ENCODE measurements at regions of chr10 and their contacts with region 1.

Region 1: DNA sequence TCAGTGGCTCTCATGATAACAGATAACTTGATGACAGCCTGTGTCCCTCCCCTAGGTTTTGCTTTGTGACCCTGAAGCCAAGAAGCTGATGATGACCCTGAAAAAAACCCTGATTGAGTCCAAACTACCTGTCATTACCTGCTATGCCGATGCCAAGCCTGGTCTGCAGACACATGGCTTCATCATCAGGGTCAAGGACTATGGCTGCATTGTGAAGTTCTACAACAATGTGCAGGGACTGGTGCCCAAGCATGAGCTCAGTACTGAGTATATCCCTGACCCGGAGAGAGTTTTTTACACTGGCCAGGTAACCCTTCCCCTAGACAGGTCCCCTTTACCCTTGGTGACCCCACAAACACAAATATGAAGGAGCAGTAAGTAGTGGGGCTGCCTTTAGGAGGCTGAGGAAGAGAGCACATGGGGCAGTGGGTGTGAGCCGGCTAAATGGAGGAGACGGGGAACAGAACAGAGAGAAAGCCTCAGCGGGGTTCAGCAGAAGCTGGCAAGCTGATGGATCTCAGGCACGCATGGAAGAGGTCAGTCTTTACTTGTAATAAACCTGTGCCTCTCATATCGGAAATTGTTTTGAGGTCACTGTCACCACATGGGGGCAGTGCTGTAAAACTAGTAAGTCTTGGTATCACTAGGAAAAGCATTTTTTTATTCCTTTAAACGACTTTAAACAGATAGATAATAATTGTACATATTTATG is 20.2 kb downstream of the PDCD11 start:
- DNase-seq: peak; percentile 60
- H3K4me3 ChIP-seq: no peak overlapping the region
- H3K27ac ChIP-seq: no peak overlapping the region
- H3K27me3 ChIP-seq: no peaks in the 10 kb centered on the region
- CTCF ChIP-seq: peak; percentile 57

Region 2: GRCh38 chr10:103470761-103471653 is 54.4 kb after region 1 on chr10:
- in situ Hi-C with region 1: loop called (anchors 10 kb)
- DNase-seq: no peak
- H3K4me3 ChIP-seq: no peak overlapping the region
- H3K27ac ChIP-seq: no peak overlapping the region
- H3K27me3 ChIP-seq: no peaks in the 10 kb centered on the region
- CTCF ChIP-seq: no peak

Measured in brain microvascular endothelial cell (primary cell).